ENCODE measurements at regions of chr17 and their contacts with region 1.

Region 1: DNA sequence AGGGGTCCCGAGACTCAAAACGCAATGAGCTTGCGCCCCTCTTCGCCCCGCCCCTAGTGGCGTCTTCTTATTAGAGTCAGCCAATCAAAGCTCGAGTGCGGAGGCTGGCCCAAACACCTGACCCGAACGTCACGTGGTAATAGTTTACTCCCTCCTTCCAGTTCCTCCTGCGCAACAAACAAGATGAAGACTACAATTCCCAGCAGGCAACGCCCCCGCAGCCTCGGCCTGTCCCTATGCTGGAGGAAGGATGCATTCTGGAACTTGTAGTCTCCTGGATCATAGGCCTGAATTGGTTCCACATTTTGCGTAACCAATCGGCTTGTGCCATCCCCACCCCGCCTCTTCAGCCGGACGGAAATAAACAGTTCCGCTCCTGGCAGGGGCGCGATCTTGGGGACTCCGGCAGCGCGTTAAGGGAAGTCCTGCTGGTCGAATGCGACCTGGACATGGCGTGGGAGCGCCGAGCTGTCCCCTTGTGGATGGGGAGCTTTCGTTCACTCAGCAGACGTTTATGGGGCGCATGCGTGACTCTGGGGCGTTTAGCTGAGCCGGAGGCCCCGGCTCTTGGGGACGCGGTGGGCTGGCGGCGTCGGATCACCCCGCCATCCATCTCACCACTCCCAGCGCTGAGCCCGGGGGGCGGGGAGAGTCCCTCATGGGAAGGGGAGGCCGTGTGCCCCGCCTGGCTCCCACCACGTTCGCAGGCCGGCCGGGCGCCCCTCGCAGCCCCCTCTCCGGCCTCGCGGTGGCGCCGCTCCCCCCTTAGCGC is at the start of gene WBP2:
- DNase-seq: peak; percentile 97
- H3K4me3 ChIP-seq: peak within 1 kb of the TSS; percentile 72 to 83
- H3K27ac ChIP-seq: peak within 1 kb of the TSS; percentile 86 to 88
- H3K4me1 ChIP-seq: peaks cover 12 to 19% of the 10 kb centered on the region in 2 experiments; a peak in 3 of 4 replicates
- H3K27me3 ChIP-seq: no peaks in the 10 kb centered on the region
- CTCF ChIP-seq: peak; percentile 70
- EP300 ChIP-seq: no peak
- RAD21 ChIP-seq: no peak; the same call in none of the 2 replicates
- polyA plus RNA-seq, gene WBP2: 49.7 and 55.8 TPM in 2 replicates

Region 2: DNA sequence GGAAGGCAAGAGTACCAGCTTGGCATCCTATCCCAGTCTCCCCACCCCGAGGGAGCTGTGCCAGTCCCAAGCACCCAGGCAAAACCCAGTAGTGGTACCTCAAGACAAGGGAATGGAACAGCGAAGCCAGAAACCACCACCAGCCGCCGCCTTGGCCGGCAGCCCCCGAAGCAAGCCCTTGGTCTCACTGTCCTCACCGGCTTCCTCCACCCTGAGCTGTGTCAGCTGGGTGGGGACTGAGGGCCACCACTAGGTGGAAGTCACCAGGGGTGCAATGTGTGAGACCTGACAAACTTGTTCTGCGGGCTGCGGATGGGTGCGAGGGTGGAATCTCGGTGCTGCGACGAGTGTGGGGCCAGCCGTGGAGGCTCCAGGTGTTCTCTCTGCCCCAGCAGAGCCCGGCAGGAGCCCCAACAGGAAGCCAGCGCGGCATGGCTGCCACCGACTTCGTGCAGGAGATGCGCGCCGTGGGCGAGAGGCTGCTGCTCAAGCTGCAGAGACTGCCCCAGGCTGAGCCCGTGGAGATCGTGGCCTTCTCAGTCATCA is 215.7 kb before region 1 on chr17:
- CTCF ChIA-PET with region 1: no interaction called
- POLR2A ChIA-PET with region 1: no interaction called
- DNase-seq: no peak
- H3K4me3 ChIP-seq: no peak overlapping the region
- H3K27ac ChIP-seq: no peak overlapping the region
- H3K4me1 ChIP-seq: no peaks in the 10 kb centered on the region; a peak in 1 of 4 replicates
- H3K27me3 ChIP-seq: no peaks in the 10 kb centered on the region
- CTCF ChIP-seq: no peak
- EP300 ChIP-seq: no peak
- RAD21 ChIP-seq: no peak

Region 3: DNA sequence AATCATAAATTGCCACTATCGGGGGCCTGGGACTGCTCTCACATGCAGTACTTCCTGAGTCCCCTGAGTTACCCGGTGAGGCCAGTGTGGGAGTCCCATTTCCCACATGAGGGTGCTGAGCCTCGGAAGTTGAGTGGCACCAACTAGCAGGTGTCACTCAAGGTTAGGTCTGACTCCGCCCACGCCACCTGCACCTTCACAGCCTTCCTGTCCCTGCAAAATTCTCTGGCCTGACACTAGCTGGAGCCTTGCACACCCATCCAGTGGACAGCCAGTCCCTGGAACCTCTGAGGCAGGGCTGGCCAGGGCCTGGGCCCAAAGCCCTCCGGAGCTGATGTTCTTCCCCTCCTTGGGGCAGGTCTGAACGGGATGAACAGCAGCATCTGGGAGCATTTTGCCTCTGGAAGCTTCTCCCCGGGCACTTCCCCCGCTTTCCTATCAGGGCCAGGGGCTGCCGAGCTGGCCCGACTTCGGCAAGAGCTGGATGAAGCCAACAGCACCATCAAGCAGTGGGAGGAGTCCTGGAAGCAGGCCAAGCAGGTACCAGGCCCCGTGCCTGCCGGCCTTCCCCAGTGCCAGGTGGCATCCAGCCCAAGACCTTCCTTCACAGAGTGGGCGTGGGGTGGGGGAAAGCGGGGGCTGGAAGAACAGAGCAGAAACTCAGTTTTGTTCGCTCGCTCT is 33.2 kb before region 1 on chr17:
- CTCF ChIA-PET with region 1: interaction called, 326 read pairs
- POLR2A ChIA-PET with region 1: no interaction called
- DNase-seq: peak; percentile 71
- H3K4me3 ChIP-seq: no peak overlapping the region
- H3K27ac ChIP-seq: peak overlapping the region in 1 of 2 experiments; percentile 57; a peak in 1 of 4 replicates
- H3K4me1 ChIP-seq: peaks cover 0 to 32% of the 10 kb centered on the region in 2 experiments; a peak in 1 of 4 replicates
- H3K27me3 ChIP-seq: no peaks in the 10 kb centered on the region
- CTCF ChIP-seq: no peak
- EP300 ChIP-seq: no peak
- RAD21 ChIP-seq: no peak

Region 4: DNA sequence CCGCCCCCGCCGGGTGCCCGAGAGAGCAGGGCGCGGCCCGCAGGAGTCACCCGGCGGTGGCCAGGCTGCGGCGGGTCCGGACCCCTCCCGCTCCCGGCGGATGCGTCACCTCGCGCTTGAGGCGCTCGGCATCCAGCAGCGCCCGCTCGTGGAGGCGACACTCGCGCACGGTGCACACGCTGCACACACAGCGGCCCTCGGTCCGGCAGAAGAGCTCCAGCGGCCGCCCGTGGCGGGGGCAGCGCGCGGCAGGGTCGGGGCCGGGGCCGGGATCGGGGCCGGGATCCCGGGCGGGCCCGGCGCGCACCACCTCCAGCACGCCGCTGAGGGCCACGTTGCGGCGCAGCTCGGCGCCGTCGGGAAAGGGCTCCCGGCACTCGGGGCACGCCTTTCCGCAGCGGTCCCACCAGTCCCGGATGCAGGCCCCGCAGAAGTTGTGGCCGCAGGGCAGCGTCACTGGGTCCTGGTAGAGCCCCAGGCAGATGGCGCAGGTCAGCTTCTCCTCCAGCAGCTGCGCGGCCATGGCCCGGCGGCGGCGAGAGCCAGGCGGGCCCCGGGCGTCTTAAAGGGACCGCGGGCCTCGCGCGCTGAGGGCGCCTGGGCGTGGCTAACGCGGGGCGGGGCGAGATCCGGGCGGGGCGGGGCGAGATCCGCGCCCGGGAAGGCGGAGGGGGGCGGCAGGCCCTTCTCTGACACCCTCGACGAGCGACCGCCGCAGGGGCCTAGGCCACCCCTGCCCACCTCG is 41.1 kb after region 1 on chr17 and contains the start of gene TRIM65:
- CTCF ChIA-PET with region 1: interaction called, 38 read pairs
- POLR2A ChIA-PET with region 1: interaction called, 12 read pairs
- DNase-seq: peak; percentile 98
- H3K4me3 ChIP-seq: peak within 1 kb of the TSS; percentile 73 to 76
- H3K27ac ChIP-seq: peak within 1 kb of the TSS; percentile 69 to 91
- H3K4me1 ChIP-seq: peaks cover 9 to 13% of the 10 kb centered on the region in 2 experiments; a peak in 3 of 4 replicates
- H3K27me3 ChIP-seq: no peaks in the 10 kb centered on the region
- CTCF ChIP-seq: peak; percentile 43
- EP300 ChIP-seq: no peak
- RAD21 ChIP-seq: peak; percentile 32
- polyA plus RNA-seq, gene TRIM65: 13.1 and 18.1 TPM in 2 replicates

Region 5: DNA sequence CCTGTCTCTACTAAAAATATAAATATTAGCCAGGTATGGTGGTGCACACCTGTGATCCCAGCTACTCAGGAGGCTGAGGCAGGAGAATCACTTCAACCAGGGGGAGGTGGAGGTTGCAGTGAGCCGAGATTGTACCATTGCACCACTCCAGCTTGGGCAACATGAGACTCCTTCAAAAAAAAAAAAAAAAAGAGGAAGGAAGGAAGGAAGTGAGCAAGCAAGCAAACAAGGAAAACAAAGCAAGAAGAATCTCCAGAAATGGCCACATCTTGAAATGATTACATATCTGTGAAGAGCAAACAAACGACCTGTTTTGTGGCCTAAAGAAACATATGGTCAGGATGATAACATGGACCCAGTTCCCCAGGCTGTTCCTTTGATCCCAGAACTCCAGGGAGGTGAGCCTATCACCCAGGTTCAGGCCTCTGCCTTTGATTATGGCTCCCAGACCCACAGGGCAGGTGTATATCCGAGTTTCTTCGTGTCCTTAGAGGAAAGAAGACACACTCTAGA is 114.6 kb after region 1 on chr17:
- CTCF ChIA-PET with region 1: no interaction called
- POLR2A ChIA-PET with region 1: no interaction called
- DNase-seq: peak; percentile 53
- H3K4me3 ChIP-seq: no peak overlapping the region
- H3K27ac ChIP-seq: peak overlapping the region in 1 of 2 experiments; percentile 12; a peak in 1 of 4 replicates
- H3K4me1 ChIP-seq: peaks cover 0 to 3% of the 10 kb centered on the region in 2 experiments; a peak in 1 of 4 replicates
- H3K27me3 ChIP-seq: no peaks in the 10 kb centered on the region
- CTCF ChIP-seq: no peak
- EP300 ChIP-seq: no peak
- RAD21 ChIP-seq: no peak

Measured in SK-N-SH (cell line).